RWPE1 (cell line): ENCODE measurements at regions of chr19 and their contacts with region 1.

Region 1: GRCh38 chr19:38734426-38735256 is 9.6 kb downstream of the CAPN12 start:
- DNase-seq: no peak
- H3K27ac ChIP-seq: peak overlapping the region; percentile 84
- CTCF ChIP-seq: no peak

Region 2: GRCh38 chr19:38759590-38760003 is 25.0 kb after region 1 on chr19:
- CTCF ChIA-PET with region 1: no interaction called
- POLR2A ChIA-PET with region 1: interaction called, 15 read pairs
- DNase-seq: no peak
- H3K27ac ChIP-seq: no peak overlapping the region
- CTCF ChIP-seq: no peak

Region 3: GRCh38 chr19:38838573-38839269 is 104.1 kb after region 1 on chr19:
- CTCF ChIA-PET with region 1: interaction called, 18 read pairs
- POLR2A ChIA-PET with region 1: interaction called, 6 read pairs
- DNase-seq: peak; percentile 88
- H3K27ac ChIP-seq: peak overlapping the region; percentile 91
- CTCF ChIP-seq: no peak